Adrenal gland (tissue), 19 donors: ENCODE measurements at regions of chr18 and their contacts with region 1.

Region 1: DNA sequence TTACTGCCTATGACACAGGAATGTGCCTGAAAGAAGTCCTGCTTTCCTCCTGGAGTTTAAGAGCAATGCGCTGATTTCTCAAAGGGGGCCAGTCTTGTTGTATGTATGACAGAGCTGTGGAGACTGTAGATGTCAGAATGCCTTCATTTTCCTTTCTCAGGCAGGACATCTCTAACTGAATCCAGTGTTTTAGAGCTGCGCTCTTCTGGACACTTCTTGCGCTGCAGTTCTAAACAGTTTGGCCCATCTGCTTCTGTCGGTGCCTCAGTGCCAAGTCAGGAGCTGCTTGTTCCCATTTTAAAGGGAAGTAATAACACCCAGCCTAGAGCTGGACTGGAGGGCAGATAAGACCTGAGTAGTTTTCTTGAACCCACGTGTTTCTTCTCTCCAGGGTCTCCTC is 91.4 kb downstream of the ESCO1 start:
- DNase-seq: no peak
- H3K4me3 ChIP-seq: no peak overlapping the region
- H3K27ac ChIP-seq: no peak overlapping the region
- H3K4me1 ChIP-seq: no peaks in the 10 kb centered on the region
- H3K27me3 ChIP-seq: no peaks in the 10 kb centered on the region
- CTCF ChIP-seq: no peak
- POLR2A ChIP-seq: no peak

Region 2: DNA sequence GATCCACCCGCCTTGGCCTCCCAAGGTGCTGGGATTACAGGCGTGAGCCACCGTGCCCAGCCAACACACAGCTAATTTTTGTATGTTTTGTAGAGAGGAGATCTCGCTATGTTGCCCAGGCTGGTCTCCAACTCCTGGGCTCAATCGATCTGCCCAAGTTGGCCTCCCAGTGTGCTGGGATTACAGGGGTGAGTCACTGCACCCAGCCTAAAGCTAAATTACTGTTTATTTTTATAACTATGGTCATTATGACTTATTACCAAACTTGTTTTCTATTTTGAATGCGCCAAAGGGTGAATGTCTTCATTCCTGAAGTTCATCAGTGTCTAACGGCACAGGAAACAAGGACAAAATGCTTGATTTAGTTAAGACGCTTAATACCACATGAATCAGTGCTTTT is 306.0 kb before region 1 on chr18:
- intact Hi-C with region 1: loop called in 1 of 2 experiments (anchors 10 kb)
- DNase-seq: no peak
- H3K4me3 ChIP-seq: no peak overlapping the region
- H3K27ac ChIP-seq: no peak overlapping the region
- H3K4me1 ChIP-seq: no peaks in the 10 kb centered on the region
- H3K27me3 ChIP-seq: no peaks in the 10 kb centered on the region
- CTCF ChIP-seq: no peak
- POLR2A ChIP-seq: no peak

Region 3: DNA sequence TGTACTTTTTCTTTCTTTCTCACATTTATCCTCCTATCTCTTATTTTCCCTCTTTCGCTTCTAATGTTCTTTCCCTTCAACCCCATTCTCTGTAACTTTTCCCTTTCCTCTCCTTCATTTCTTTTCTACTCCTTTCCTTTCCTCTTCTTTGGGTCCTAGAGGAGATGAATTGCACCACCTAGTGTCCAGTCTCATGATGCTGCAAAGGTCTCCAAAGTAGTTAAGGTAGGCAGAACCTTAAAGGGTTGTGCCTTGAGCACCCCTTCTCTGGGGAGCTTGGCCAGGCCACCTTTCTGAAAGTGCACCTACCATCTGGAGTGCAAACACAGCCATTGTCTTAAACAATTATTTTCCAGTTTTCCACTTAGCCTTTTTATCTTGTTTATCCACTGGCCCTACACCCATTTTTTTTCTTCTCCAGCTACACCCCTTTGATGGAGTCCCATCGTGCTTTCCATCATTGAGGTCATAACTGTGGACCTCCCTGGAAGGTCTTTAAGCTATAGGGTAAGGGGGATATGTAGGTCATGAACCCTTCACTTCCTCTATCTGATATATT is 64.5 kb before region 1 on chr18:
- intact Hi-C with region 1: no loop called
- DNase-seq: peak in 6 of 7 donors; percentile 24 to 58 (median 34)
- H3K4me3 ChIP-seq: no peak overlapping the region
- H3K27ac ChIP-seq: no peak overlapping the region
- H3K4me1 ChIP-seq: no peaks in the 10 kb centered on the region
- H3K27me3 ChIP-seq: no peaks in the 10 kb centered on the region
- CTCF ChIP-seq: peak; percentile 41 to 68 (median 60)
- POLR2A ChIP-seq: no peak